Activated CD4-positive, alpha-beta memory T cell treated with anti-CD3 and anti-CD28 coated beads for 36 hours (primary cell): ENCODE measurements at regions of chr2 and their contacts with region 1.

Region 1: GRCh38 chr2:68943581-68944568 is 8.8 kb downstream of the GKN2 start:
- DNase-seq: peak; percentile 58
- H3K4me3 Mint-ChIP-seq: no peak overlapping the region
- H3K27ac Mint-ChIP-seq: no peak overlapping the region
- H3K4me1 Mint-ChIP-seq: peaks cover 8% of the 10 kb centered on the region
- H3K27me3 Mint-ChIP-seq: peaks cover 32% of the 10 kb centered on the region

Region 2: GRCh38 chr2:68931799-68932198 is 12.1 kb before region 1 on chr2:
- CTCF ChIA-PET with region 1: interaction called, 19 read pairs
- POLR2A ChIA-PET with region 1: no interaction called
- intact Hi-C with region 1: no loop called
- DNase-seq: no peak
- H3K4me3 Mint-ChIP-seq: no peak overlapping the region
- H3K27ac Mint-ChIP-seq: no peak overlapping the region
- H3K4me1 Mint-ChIP-seq: no peaks in the 10 kb centered on the region
- H3K27me3 Mint-ChIP-seq: peaks cover 2% of the 10 kb centered on the region

Region 3: GRCh38 chr2:69033461-69034095 is 89.7 kb after region 1 on chr2:
- CTCF ChIA-PET with region 1: no interaction called
- POLR2A ChIA-PET with region 1: no interaction called
- intact Hi-C with region 1: no loop called
- DNase-seq: no peak
- H3K4me3 Mint-ChIP-seq: no peak overlapping the region
- H3K27ac Mint-ChIP-seq: no peak overlapping the region
- H3K4me1 Mint-ChIP-seq: no peaks in the 10 kb centered on the region
- H3K27me3 Mint-ChIP-seq: peaks cover 18% of the 10 kb centered on the region

Region 4: GRCh38 chr2:69095305-69095704 is 151.4 kb after region 1 on chr2:
- CTCF ChIA-PET with region 1: no interaction called
- POLR2A ChIA-PET with region 1: no interaction called
- intact Hi-C with region 1: no loop called
- DNase-seq: no peak
- H3K4me3 Mint-ChIP-seq: no peak overlapping the region
- H3K27ac Mint-ChIP-seq: no peak overlapping the region
- H3K4me1 Mint-ChIP-seq: no peaks in the 10 kb centered on the region
- H3K27me3 Mint-ChIP-seq: peaks cover 12% of the 10 kb centered on the region